Activated CD4-positive, alpha-beta T cell treated with anti-CD3 and anti-CD28 coated beads for 36 hours (primary cell): ENCODE measurements at regions of chr19 and their contacts with region 1.

Region 1: GRCh38 chr19:53333463-53334449 is at the start of gene ZNF845:
- DNase-seq: peak; percentile 97
- ATAC-seq: peak; percentile 99
- H3K4me3 Mint-ChIP-seq: peak within 1 kb of the TSS; percentile 88
- H3K27ac Mint-ChIP-seq: peak within 1 kb of the TSS; percentile 92
- H3K4me1 Mint-ChIP-seq: peaks cover 10% of the 10 kb centered on the region
- H3K27me3 Mint-ChIP-seq: peaks cover 5% of the 10 kb centered on the region
- total RNA-seq, gene ZNF845: 5.9 to 6.3 TPM

Region 2: DNA sequence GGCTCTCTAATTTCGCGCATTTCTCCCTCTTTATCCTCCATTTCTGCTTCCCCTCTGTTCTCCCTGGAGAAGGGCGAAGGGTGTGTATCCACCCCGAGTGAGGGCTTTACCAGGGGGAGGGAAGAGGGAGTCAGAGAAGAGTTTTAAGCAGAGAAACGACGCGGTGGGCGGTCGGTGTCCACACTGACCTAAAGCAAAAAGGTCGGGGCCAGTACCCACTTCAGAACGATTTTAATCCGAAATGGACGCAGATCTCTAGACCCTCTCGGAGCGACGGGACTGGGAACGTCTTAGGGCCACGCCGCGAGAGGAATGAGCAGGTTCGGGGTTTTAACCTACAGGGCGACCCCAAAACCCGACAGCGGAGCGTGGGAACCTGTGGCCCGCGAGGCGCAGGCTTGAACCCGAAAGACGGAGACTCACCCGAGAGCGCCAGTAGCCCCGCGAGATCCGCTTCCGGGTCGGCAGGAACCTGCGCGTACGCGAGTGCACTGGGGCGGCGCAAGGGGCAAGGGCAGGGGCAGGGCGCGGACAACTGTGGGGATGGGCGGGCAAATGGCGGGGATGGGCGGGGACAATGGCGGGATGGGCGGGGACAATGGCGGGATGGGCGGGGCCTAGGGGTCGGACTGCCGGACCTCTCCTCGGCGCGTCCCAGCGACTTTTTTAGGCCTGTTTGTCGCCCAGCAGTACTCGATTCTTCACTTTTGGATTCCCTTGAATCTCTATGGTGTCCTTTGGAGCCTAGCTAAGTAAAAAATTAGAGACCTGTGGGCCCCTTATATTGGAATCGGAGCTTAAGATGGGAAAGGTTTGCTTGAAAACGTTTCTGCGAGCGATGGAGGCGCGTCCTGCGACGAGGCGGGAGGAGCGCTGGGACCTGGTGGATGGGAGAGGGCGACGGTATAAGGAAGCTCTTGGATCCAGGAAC is 79.1 kb before region 1 on chr19 and contains the start of gene ZNF677:
- CTCF ChIA-PET with region 1: no interaction called
- POLR2A ChIA-PET with region 1: no interaction called
- intact Hi-C with region 1: loop called (anchors 1 kb)
- DNase-seq: peak; percentile 92
- ATAC-seq: peak; percentile 100
- H3K4me3 Mint-ChIP-seq: peak within 1 kb of the TSS; percentile 84
- H3K27ac Mint-ChIP-seq: peak within 1 kb of the TSS; percentile 53
- H3K4me1 Mint-ChIP-seq: peaks cover 10% of the 10 kb centered on the region
- H3K27me3 Mint-ChIP-seq: no peaks in the 10 kb centered on the region
- total RNA-seq, gene ZNF677: 6.4 to 7.5 TPM

Region 3: GRCh38 chr19:53394974-53395839 is 61.5 kb after region 1 on chr19 and contains the start of gene ZNF765:
- CTCF ChIA-PET with region 1: no interaction called
- POLR2A ChIA-PET with region 1: no interaction called
- intact Hi-C with region 1: loop called (anchors 1 kb)
- DNase-seq: peak; percentile 98
- ATAC-seq: peak; percentile 99
- H3K4me3 Mint-ChIP-seq: peak within 1 kb of the TSS; percentile 84
- H3K27ac Mint-ChIP-seq: peak within 1 kb of the TSS; percentile 89
- H3K4me1 Mint-ChIP-seq: peaks cover 25% of the 10 kb centered on the region
- H3K27me3 Mint-ChIP-seq: no peaks in the 10 kb centered on the region
- total RNA-seq, gene ZNF765: 10.7 to 10.9 TPM

Region 4: GRCh38 chr19:53431399-53432087 is 97.8 kb after region 1 on chr19 and contains the start of gene ZNF761:
- CTCF ChIA-PET with region 1: no interaction called
- POLR2A ChIA-PET with region 1: interaction called, 3 read pairs
- intact Hi-C with region 1: loop called in 1 of 2 experiments (anchors 1 kb)
- DNase-seq: peak; percentile 98
- ATAC-seq: peak; percentile 99
- H3K4me3 Mint-ChIP-seq: peak within 1 kb of the TSS; percentile 94
- H3K27ac Mint-ChIP-seq: peak within 1 kb of the TSS; percentile 83
- H3K4me1 Mint-ChIP-seq: peaks cover 26% of the 10 kb centered on the region
- H3K27me3 Mint-ChIP-seq: no peaks in the 10 kb centered on the region
- total RNA-seq, gene ZNF761: 10.5 to 11.4 TPM

Region 5: DNA sequence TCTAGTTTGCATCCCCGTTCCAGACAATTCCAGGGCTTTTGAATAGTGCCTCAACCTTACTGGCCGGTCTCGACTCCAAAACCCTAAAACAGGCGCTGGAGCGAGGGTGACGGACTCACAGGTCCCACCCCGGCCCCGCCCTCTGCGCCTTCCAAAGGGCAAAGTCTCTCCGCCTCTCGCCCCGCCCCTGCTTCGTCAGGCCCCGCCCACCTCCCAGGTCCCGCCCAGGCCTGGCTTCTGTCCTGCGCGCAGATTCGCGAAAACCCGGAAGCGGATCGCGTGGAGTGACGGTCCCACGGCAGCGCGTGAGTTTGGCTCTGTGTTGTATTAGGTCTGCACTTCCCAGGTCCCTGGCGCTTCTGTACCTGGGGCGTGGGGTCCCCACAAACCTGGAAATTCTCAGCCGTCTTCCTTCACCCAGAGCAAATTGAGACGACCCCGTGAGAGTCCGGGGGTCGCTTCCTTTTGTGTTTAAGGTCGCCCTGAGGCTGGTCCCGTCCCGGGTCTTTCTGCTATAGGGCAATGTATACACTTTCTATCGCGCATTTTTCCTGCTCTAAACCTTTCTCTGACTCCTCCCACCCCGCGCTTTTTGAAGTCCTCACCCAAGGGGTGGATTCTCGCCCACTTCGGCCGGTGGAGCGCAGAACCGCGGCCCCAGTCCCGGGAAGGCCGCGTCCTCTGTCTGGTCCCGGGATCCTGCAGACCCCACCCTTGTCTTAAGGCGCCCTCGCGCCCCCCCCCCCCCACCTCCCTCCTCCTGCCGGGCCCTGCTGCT is 133.9 kb after region 1 on chr19 and contains the start of gene ZNF813:
- CTCF ChIA-PET with region 1: no interaction called
- POLR2A ChIA-PET with region 1: no interaction called
- intact Hi-C with region 1: loop called in 1 of 2 experiments (anchors 1 kb)
- DNase-seq: peak; percentile 98
- ATAC-seq: peak; percentile 98
- H3K4me3 Mint-ChIP-seq: peak within 1 kb of the TSS; percentile 80
- H3K27ac Mint-ChIP-seq: peak within 1 kb of the TSS; percentile 87
- H3K4me1 Mint-ChIP-seq: peaks cover 20% of the 10 kb centered on the region
- H3K27me3 Mint-ChIP-seq: peaks cover 9% of the 10 kb centered on the region
- total RNA-seq, gene ZNF813: 5.8 to 7.4 TPM